ENCODE measurements at regions of chr16 and their contacts with region 1.

Region 1: DNA sequence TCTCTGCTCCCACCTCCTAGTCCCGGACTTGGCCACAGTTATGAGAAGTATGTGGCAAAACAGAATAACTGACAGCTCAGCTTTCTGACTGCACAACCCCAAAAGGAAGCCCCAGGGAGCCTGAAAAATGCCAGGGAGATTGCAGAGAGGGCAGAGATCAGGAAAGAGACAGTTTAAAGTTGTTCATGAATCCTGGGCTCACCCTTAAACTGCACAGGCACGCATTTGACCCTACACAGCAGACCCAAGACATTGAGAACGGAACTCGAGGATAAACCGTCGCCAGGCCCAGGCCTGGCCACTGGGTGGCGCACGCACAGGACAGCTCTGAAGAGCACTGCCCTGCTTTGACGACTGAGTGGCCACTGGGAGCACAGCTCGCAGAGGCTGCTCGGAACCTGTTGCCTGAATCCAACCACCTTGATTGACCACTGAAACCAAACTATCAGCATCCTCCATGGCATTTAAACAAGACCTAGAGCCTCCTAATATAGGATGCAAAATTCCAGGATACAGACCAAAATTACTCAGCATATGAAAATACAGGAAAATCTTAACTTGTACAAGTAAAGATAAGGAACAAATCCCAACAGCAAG is 114.0 kb downstream of the C16orf95 start:
- DNase-seq: peak; percentile 77
- H3K4me3 ChIP-seq: no peak overlapping the region
- H3K27ac ChIP-seq: no peak overlapping the region
- H3K4me1 ChIP-seq: no peaks in the 10 kb centered on the region
- H3K27me3 ChIP-seq: no peaks in the 10 kb centered on the region
- CTCF ChIP-seq: peak; percentile 97

Region 2: DNA sequence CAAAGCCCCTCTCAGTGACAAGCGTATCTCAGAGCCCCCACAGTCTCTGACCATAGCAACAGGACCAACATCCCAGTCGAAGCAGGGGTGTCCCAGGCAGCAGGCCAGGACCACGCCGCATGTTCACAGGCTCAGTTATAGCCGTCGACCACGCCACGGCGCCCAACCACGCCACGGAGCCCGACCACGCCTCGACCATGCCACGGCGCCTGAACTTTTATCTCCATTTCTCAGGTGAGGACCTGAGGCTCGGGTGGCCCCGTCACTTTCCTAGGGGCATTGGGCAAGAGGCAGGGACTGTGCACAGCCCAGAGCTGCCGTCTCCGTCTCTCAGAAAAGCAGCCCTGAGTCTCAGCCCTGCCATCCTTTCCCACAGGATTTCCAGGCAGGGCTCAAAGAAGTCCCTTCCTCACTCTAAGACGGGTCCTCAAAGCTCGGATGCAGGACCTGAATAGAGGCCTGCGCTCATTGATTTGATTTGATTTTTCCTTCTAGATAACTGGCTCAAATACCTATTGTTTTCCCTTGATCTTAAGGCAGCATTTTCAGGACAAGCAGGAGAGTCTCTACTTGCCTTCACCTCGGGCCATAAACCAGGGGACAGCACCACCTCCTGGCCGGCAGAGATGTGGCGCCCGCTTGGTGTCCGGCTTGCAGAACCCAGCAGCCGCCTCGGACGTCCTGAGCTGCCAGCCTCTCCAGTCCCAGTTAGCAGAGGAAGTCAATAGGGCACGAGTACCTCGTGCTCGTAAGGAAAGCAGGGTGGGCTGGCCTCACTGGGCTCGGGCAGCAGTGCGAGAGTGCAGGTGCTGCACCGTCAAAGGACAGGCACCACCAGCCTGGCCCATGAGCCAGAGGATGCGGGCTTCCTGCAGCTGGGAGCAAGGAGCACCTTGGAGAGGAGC is 75.3 kb after region 1 on chr16:
- CTCF ChIA-PET with region 1: no interaction called
- POLR2A ChIA-PET with region 1: no interaction called
- intact Hi-C with region 1: loop called (anchors 1 kb)
- DNase-seq: peak; percentile 70
- H3K4me3 ChIP-seq: no peak overlapping the region
- H3K27ac ChIP-seq: no peak overlapping the region
- H3K4me1 ChIP-seq: no peaks in the 10 kb centered on the region
- H3K27me3 ChIP-seq: no peaks in the 10 kb centered on the region
- CTCF ChIP-seq: peak; percentile 96

Region 3: GRCh38 chr16:87571136-87571867 is 368.1 kb after region 1 on chr16:
- CTCF ChIA-PET with region 1: no interaction called
- POLR2A ChIA-PET with region 1: no interaction called
- intact Hi-C with region 1: no loop called
- DNase-seq: no peak
- H3K4me3 ChIP-seq: no peak overlapping the region
- H3K27ac ChIP-seq: no peak overlapping the region
- H3K4me1 ChIP-seq: no peaks in the 10 kb centered on the region
- H3K27me3 ChIP-seq: peaks cover 3% of the 10 kb centered on the region
- CTCF ChIP-seq: peak; percentile 48